ENCODE measurements at regions of chr6 and their contacts with region 1.

Region 1: GRCh38 chr6:29847871-29848630 is 20.4 kb downstream of the HLA-G start:
- DNase-seq: peak; percentile 67 to 82
- ATAC-seq: peak; percentile 85 to 95 (median 90)
- H3K4me3 ChIP-seq: no peak overlapping the region
- H3K27ac ChIP-seq: no peak overlapping the region
- H3K4me1 ChIP-seq: peaks cover 0 to 14% (median 4%) of the 10 kb centered on the region in 9 donors
- H3K27me3 ChIP-seq: peaks cover 0 to 85% (median 66%) of the 10 kb centered on the region in 7 donors
- CTCF ChIP-seq: peak; percentile 82 to 98 (median 94)

Region 2: GRCh38 chr6:30013291-30013922 is 165.4 kb after region 1 on chr6:
- intact Hi-C with region 1: loop called (anchors 1 to 2 kb)
- DNase-seq: peak; percentile 42 to 69
- ATAC-seq: peak in 7 of 8 donors; percentile 65 to 83 (median 71)
- H3K4me3 ChIP-seq: no peak overlapping the region
- H3K27ac ChIP-seq: no peak overlapping the region
- H3K4me1 ChIP-seq: no peaks in the 10 kb centered on the region
- H3K27me3 ChIP-seq: peaks cover 0 to 10% (median 0%) of the 10 kb centered on the region in 7 donors
- CTCF ChIP-seq: peak; percentile 76 to 98 (median 91)

Region 3: DNA sequence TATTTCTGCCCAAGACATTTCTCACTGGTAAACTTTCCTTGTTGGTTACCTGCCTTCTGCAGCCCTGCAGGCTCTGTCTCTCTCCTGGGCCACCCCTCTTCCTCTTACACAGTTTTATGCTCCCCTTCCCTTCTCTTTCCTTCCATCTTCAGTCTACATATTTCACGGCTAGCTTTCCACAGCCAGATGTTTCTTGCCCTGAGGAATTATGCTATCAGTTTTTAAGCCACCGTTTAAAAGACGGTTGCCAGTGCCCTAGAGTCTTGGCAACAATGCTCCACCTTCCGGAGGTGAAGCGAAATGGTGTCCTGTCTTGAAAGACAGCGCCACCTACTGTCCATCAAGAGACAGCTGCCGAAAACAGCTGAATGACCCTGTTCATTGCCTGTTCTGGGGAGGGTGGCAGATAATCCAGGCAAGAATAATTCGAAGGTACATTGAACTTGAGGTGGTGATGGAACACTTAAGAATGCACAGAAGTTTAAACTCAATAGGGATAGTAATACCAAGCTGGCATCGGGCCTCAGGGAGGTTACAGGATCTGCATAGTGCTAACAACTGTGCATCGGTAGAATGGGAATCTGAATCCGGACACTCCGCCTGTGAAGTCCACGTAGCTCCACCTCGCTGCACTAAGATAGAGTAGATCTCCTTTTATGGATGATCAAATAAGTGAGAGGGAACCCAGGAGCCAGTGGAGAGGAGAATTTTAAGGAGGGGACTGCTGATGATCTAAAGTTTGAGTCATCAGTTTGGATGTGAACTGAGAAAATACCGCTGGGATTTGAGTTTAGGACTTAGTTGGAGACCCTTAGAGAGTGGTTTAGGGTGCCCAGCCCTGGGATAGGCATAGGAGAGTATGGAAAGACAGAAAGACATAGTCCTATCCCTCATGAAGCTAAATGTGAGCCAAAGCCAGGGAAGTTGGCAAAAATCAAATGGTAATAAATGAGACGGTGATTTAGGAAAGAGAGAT is 283.1 kb after region 1 on chr6:
- intact Hi-C with region 1: loop called in 5 of 10 experiments (anchors 5 to 10 kb)
- DNase-seq: peak in 1 of 2 donors; percentile 71
- ATAC-seq: peak; percentile 65 to 91 (median 85)
- H3K4me3 ChIP-seq: no peak overlapping the region
- H3K27ac ChIP-seq: no peak overlapping the region
- H3K4me1 ChIP-seq: peaks cover 0 to 17% (median 10%) of the 10 kb centered on the region in 9 donors
- H3K27me3 ChIP-seq: peaks cover 10 to 97% (median 83%) of the 10 kb centered on the region in 7 donors
- CTCF ChIP-seq: peak; percentile 83 to 100 (median 97)

Measured in heart right ventricle (tissue), 16 donors.